Cardiac septum (tissue), 1 donor: ENCODE measurements at regions of chr16 and their contacts with region 1.

Region 1: DNA sequence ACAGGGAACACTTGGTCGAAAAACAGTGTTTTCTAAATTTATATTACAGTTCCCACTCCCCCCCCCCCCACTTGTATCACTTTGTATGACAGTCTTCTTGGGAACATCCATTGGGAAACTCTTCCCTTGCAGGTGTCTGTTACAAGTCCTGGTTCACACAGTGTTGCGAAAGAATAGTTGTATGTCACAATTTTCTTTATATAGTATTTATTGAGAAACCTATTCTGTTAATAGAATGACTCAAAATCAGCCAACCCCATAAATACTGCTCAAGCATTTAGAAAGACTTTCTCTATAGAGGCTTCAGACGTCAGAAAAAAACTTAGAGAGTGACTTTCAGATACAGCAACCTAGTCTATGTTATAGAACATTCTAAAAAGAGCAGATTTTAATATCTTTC is 414.4 kb downstream of the WWOX start:
- DNase-seq: no peak

Region 2: DNA sequence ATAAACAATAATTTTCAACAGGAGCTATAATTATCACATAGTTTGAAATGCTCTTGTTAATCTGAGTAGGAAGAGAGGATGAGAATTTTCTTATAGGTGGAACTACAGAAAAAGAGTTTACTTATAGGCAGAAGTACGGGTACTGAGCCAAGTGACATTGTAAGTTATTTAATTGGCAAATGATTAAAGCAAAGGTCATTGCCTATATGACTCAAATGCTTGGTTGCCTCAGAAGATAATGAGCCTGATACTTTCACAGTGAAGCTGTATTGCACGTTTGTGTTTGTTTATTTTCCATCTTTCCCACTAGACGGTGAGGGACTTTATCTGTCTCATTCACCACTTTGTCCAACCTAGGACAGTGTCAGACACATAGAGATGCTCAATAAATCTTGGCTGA is 337.4 kb after region 1 on chr16:
- intact Hi-C with region 1: loop called (anchors 10 kb)
- DNase-seq: no peak

Region 3: GRCh38 chr16:79542237-79542774 is 1028.5 kb after region 1 on chr16:
- intact Hi-C with region 1: no loop called
- DNase-seq: peak; percentile 79